Activated naive CD4-positive, alpha-beta T cell treated with anti-CD3 and anti-CD28 coated beads for 36 hours (primary cell): ENCODE measurements at regions of chr6 and their contacts with region 1.

Region 1: GRCh38 chr6:34526992-34527728 is 29.0 kb downstream of the SPDEF start:
- DNase-seq: peak; percentile 97
- H3K4me3 Mint-ChIP-seq: peak overlapping the region; percentile 38
- H3K27ac Mint-ChIP-seq: no peak overlapping the region
- H3K4me1 Mint-ChIP-seq: peaks cover 6% of the 10 kb centered on the region
- H3K27me3 Mint-ChIP-seq: no peaks in the 10 kb centered on the region

Region 2: DNA sequence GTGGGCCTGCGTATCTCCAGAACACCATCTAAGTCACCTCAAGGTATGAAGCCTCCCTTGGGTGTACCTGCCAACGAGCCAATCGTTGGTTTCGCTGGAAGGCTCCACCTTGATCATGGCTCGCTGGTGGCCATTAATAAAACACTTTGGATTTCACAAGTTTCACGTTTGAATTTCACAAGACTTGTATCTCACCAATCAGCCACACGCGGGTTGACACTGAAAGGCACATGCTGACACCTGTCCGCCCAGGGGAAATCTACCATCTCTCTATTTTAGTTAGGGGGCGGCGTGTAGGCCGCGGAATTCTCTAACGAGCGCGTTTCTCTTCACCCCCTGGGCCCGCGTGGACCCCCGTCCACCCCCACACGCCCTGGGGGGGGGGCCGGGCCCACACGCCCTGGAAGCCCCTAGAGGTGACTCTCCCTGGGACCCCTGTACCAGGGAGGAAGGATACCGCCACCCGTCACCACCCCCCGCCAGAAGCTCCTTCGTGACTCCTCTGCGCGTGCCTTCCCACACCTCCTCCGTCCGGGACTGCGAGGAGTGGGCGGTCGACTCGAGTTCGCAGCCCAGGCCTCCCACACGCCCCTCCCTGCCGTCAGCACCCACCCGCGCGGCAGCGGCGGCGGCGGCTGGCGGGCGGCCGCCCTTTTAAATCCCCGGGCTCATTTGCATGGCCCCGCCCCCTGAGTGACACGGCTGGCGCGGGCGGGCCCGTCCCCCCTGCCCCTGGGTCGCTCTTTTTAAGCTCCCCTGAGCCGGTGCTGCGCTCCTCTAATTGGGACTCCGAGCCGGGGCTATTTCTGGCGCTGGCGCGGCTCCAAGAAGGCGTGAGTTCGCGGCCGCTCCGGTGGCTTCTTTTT is 290.8 kb before region 1 on chr6 and contains the start of gene HMGA1:
- CTCF ChIA-PET with region 1: no interaction called
- intact Hi-C with region 1: loop called (anchors 2 kb)
- DNase-seq: peak; percentile 89
- H3K4me3 Mint-ChIP-seq: peak within 1 kb of the TSS; percentile 91
- H3K27ac Mint-ChIP-seq: peak within 1 kb of the TSS; percentile 93
- H3K4me1 Mint-ChIP-seq: peaks cover 42% of the 10 kb centered on the region
- H3K27me3 Mint-ChIP-seq: no peaks in the 10 kb centered on the region
- total RNA-seq, gene HMGA1: 705 to 712 TPM

Region 3: GRCh38 chr6:34459899-34460593 is 67.1 kb before region 1 on chr6:
- CTCF ChIA-PET with region 1: interaction called, 3 read pairs
- intact Hi-C with region 1: loop called (anchors 1 kb)
- DNase-seq: peak; percentile 75
- H3K4me3 Mint-ChIP-seq: no peak overlapping the region
- H3K27ac Mint-ChIP-seq: no peak overlapping the region
- H3K4me1 Mint-ChIP-seq: peaks cover 1% of the 10 kb centered on the region
- H3K27me3 Mint-ChIP-seq: peaks cover 10% of the 10 kb centered on the region

Region 4: GRCh38 chr6:34484899-34485298 is 42.3 kb before region 1 on chr6:
- CTCF ChIA-PET with region 1: no interaction called
- intact Hi-C with region 1: loop called (anchors 2 kb)
- DNase-seq: peak; percentile 94
- H3K4me3 Mint-ChIP-seq: no peak overlapping the region
- H3K27ac Mint-ChIP-seq: peak overlapping the region; percentile 72
- H3K4me1 Mint-ChIP-seq: peaks cover 24% of the 10 kb centered on the region
- H3K27me3 Mint-ChIP-seq: no peaks in the 10 kb centered on the region

Region 5: DNA sequence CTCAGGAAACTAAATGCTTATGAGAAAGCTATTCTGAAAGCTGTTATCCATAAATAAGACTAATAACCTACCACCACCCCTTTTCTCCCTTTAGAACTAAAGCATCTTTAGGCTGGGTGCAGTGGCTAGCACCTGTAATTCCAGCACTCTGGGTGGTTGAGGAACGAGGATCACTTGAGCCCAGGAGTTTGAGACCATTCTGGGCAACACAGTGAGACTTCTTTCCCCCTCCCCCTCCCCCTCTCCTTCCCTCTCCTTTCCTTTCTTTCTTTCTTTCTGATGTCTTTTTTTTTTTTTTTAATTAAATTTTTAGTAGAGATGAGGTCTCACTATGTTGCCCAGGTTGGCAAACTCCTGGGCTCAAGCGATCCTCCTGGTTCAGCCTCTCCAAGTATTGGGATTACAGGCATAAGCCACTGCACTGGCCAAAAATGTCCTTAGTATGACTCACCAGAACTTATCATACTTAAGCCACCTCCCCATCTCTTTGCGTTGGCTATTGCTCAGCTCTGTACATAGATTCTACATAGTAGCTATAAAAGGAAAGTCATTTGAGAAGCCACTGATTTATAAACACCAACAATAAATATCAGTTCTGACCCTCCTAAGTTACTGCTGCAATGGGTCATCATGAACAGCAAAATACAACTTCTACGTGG is 83.8 kb after region 1 on chr6:
- CTCF ChIA-PET with region 1: interaction called, 14 read pairs
- intact Hi-C with region 1: loop called (anchors 1 kb)
- DNase-seq: no peak
- H3K4me3 Mint-ChIP-seq: no peak overlapping the region
- H3K27ac Mint-ChIP-seq: no peak overlapping the region
- H3K4me1 Mint-ChIP-seq: peaks cover 12% of the 10 kb centered on the region
- H3K27me3 Mint-ChIP-seq: no peaks in the 10 kb centered on the region

Region 6: DNA sequence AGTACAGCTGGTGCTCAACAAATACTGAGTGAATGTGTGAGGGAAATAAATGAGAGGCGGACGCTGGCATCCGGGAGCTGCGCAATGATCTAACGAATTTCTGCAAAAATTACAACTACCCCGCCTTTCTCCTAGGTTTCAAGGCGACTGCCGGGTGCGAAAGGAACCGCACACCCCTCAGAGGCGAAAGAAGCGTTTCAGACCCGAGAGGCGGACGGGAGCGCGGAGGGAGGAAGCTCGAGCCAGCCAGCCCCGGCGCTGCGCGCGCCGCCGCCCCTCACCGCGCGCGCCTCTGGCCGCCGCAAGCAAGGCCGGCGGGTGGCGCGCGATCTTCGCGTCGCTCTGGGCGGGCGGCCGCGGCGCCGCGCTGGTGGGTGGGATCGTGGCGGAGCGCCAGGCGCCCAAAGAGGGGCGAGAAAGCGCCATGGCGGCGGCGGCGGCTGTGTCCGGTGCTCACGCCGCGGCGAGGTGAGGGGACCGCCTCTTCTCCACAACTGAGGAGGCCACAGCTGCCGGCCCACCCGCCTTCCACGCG is 264.6 kb after region 1 on chr6 and contains the start of gene BLTP3A:
- CTCF ChIA-PET with region 1: no interaction called
- intact Hi-C with region 1: loop called (anchors 2 kb)
- DNase-seq: peak; percentile 74
- H3K4me3 Mint-ChIP-seq: peak within 1 kb of the TSS; percentile 90
- H3K27ac Mint-ChIP-seq: peak within 1 kb of the TSS; percentile 86
- H3K4me1 Mint-ChIP-seq: peaks cover 14% of the 10 kb centered on the region
- H3K27me3 Mint-ChIP-seq: no peaks in the 10 kb centered on the region
- total RNA-seq, gene BLTP3A: 17.0 to 17.9 TPM

Region 7: DNA sequence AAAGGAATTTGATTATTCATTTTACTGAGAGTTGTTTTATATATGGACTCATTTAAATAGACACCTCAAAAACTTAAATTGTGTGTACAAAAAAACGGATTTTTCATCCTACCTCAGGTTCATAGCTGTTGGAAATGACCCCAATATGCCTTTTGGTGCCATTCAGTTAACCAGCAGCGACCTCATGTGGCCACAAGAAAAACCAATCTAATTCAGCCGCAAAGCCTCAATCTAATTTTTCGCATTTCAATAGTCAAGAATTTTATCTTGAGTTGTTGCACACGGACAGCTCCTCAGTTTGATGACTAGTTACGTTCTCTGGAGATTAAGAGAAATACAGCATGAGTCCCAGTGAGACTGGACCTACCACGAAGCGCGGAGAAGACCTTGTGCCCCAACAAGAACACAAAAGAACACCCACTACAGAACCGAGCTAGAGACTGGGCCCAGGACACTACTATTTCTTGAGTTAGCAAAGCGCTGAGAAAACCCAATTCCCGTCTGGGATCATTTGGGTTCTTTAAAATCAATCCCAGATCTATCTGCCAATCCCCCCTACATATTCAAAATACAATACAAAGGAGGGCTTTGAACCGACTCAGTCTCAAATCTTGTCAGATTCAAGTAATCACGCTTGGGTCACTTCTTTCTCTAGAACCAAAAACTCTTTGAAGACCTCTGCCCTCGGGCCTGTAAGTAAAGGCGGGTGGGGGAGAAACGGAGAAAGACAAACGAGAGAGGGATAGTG is 612.9 kb after region 1 on chr6:
- CTCF ChIA-PET with region 1: no interaction called
- intact Hi-C with region 1: loop called (anchors 5 kb)
- DNase-seq: peak; percentile 67
- H3K4me3 Mint-ChIP-seq: no peak overlapping the region
- H3K27ac Mint-ChIP-seq: no peak overlapping the region
- H3K4me1 Mint-ChIP-seq: peaks cover 15% of the 10 kb centered on the region
- H3K27me3 Mint-ChIP-seq: peaks cover 13% of the 10 kb centered on the region